ENCODE measurements at regions of chr15 and their contacts with region 1.

Region 1: GRCh38 chr15:98635848-98636247 is 12.5 kb upstream of the IGF1R start:
- DNase-seq: peak; percentile 33
- H3K4me3 ChIP-seq: no peak overlapping the region
- H3K27ac ChIP-seq: no peak overlapping the region
- H3K4me1 ChIP-seq: peaks cover 10% of the 10 kb centered on the region
- H3K27me3 ChIP-seq: no peaks in the 10 kb centered on the region
- CTCF ChIP-seq: no peak

Region 2: DNA sequence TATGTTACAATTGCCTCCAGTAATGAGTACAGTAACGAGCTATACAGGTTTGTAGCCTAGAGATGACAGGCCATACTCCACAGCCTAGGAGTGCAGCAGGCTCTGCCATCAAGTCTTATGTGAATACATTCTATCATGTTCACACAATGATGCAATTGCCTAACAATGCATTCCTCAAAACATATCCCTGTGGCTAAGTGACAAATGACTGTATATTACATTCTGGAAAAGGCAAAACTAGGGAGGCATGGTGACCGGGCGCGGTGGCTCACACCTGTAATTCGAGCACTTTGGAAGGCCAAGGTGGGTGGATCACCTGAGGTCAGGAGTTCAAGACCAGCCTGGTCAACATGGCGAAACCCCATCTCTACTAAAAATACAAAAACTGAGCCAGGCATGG is 179.9 kb before region 1 on chr15:
- CTCF ChIA-PET with region 1: no interaction called
- POLR2A ChIA-PET with region 1: no interaction called
- intact Hi-C with region 1: no loop called
- DNase-seq: no peak
- H3K4me3 ChIP-seq: no peak overlapping the region
- H3K27ac ChIP-seq: no peak overlapping the region
- H3K4me1 ChIP-seq: no peaks in the 10 kb centered on the region
- H3K27me3 ChIP-seq: no peaks in the 10 kb centered on the region
- CTCF ChIP-seq: no peak

Region 3: DNA sequence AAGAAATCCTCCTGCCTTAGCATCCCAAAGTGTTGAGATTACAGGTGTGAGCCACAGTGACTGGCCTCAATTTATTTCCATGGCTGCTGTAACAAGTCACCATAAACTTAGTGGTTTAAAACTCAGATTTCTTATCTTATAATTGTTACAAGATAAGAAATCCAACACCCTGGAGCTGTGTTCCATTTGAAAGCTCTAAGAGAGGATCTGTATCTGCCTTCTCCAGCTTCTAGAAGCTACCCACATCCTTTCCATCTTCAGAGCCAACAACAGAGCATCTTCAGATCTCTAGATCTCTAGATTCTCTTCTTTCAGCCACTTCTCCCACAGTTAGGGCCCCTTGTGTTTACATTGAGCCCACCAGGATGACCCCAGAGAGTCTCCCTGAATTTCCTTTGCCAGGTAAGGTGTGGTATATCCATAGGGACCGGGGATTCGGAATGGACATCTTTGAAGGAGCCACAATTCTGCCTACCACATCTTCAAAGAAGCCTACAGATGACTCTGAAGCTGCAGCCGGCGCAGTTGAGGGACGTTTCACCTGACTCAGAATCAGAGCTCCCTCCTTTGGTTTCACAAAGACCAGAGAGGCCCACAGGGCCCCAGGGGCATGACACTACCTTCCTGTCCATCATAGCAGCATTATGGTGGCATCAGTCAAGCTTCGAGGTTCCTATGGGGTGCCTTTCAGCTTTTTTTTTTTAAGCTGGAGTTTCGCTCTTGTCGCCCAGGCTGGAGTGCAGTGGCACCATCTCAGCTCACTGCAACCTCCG is 74.5 kb before region 1 on chr15:
- CTCF ChIA-PET with region 1: interaction called, 12 read pairs
- POLR2A ChIA-PET with region 1: no interaction called
- intact Hi-C with region 1: no loop called
- DNase-seq: no peak
- H3K4me3 ChIP-seq: no peak overlapping the region
- H3K27ac ChIP-seq: no peak overlapping the region
- H3K4me1 ChIP-seq: no peaks in the 10 kb centered on the region
- H3K27me3 ChIP-seq: no peaks in the 10 kb centered on the region
- CTCF ChIP-seq: no peak